Activated naive CD4-positive, alpha-beta T cell treated with anti-CD3 and anti-CD28 coated beads for 36 hours (primary cell): ENCODE measurements at regions of chr11 and their contacts with region 1.

Region 1: GRCh38 chr11:86592659-86593451 is 79.6 kb downstream of the ME3 start:
- DNase-seq: peak; percentile 98
- H3K4me3 Mint-ChIP-seq: no peak overlapping the region
- H3K27ac Mint-ChIP-seq: peak overlapping the region; percentile 86
- H3K4me1 Mint-ChIP-seq: peaks cover 70% of the 10 kb centered on the region
- H3K27me3 Mint-ChIP-seq: no peaks in the 10 kb centered on the region

Region 2: DNA sequence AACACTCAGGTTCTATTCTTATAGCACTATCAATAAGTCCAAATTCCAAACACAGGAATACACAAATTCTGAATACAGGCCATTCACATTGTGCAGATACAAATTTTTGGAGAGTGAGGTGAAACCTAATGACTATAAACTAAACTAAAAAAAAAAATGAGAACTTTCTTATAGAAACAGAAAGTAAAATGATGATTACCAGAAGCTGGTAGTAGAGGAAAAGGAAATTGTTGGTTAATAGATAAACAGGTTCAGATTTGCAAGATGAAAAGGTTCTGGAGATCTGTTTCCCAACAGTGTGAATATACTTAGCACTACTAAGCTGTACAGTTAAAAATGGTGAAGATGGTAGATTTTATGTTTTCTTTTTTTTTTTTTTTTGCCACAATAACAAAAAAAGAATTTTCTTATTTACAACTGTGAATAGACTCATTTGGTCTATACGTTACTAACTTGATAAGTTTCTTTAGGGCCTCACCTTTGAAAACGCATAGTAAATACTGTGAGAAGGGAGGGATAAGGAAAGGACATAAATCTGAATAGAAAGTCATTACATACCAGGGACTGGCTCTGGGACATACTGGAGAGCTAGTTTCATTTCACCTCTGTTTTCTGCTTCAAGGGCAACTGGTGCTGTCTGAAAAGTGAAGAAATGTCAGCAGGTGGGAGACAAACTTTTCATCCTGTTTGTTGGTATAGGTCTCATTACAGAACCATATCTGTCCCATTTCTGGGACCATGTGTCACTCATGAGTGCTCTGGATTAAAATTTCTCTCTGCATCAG is 892.7 kb before region 1 on chr11:
- CTCF ChIA-PET with region 1: no interaction called
- intact Hi-C with region 1: loop called (anchors 1 kb)
- DNase-seq: no peak
- H3K4me3 Mint-ChIP-seq: no peak overlapping the region
- H3K27ac Mint-ChIP-seq: peak overlapping the region; percentile 36
- H3K4me1 Mint-ChIP-seq: peaks cover 35% of the 10 kb centered on the region
- H3K27me3 Mint-ChIP-seq: no peaks in the 10 kb centered on the region

Region 3: DNA sequence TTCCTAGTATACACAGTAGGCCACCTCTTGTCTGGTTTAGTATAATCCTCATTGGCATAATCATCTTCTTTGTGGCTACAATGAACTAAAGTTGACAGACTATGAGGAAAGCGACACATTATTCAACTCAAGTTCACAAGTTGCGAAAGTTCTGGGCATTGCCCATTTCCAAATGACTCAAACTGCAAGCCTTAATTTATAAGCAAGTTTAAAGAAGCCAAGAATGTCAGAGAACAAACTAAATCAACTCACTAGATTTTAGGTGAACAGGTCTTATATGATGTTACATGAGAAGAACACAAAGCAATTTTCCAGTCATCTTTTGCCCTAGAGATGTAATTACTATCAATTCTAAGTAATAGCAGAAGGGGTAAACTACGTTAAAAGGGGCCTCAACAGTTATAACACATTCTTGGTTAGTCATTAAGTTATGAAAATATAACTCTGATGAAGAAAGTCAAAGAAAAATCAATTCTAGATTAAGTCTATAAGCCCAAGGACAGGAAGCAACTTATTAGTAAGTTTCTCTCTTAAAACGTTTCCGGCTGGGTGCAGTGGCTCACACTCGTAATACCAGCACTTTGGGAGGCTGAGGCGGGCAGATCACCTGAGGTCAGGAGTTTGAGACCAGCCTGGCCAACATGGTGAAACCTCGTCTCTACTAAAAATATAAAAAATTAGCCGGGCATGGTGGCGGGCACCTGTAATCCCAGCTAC is 545.4 kb before region 1 on chr11:
- CTCF ChIA-PET with region 1: no interaction called
- intact Hi-C with region 1: loop called (anchors 2 kb)
- DNase-seq: peak; percentile 69
- H3K4me3 Mint-ChIP-seq: peak overlapping the region; percentile 43
- H3K27ac Mint-ChIP-seq: peak overlapping the region; percentile 93
- H3K4me1 Mint-ChIP-seq: peaks cover 92% of the 10 kb centered on the region
- H3K27me3 Mint-ChIP-seq: no peaks in the 10 kb centered on the region

Region 4: DNA sequence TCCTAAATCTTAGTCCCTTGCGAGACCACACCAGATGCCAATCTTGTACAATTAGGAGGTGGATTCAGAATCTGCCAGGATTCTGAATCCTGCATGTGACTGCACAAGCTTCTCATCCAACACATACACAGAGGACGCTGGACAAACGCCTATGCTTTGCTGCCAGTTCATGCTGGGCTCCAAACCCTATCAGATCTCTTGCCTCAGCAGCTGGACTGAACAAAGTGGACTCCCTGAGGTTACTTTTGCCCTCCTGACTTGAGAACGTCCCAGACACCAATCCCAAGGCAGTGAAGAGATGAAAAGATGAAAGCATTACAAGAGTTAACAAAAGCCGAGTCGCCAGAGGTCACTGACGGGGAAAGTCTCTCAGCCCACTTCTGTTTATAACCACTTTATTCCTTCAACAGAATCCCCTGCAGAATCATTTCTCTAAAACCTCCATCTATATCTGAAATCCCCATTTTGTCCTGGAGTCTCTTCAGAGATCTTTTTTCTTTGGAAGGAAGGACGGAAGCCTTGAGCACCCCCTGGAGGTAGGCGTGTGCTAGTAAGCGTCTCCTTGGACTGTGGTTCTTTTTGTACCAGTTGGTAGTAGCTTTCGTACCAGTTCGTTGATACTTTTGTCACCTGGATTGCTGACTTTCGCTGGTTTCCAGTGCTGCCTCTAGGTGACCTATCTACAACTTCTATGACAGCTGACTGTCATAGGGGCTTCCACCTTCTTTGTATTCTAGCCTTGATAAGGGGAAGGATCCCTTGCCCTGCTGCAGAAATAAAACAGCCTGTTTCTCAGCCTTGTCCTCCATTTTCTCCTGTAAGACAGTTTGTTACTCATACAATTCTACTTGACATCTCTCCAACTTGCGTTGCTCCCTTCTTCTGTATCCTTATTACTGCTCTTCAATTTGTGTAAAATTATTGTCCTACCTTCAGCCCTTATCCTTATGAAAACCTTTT is 374.4 kb before region 1 on chr11:
- CTCF ChIA-PET with region 1: no interaction called
- intact Hi-C with region 1: loop called (anchors 2 kb)
- DNase-seq: peak; percentile 80
- H3K4me3 Mint-ChIP-seq: peak overlapping the region; percentile 14
- H3K27ac Mint-ChIP-seq: peak overlapping the region; percentile 90
- H3K4me1 Mint-ChIP-seq: peaks cover 82% of the 10 kb centered on the region
- H3K27me3 Mint-ChIP-seq: peaks cover 3% of the 10 kb centered on the region

Region 5: GRCh38 chr11:86511086-86511551 is 81.7 kb before region 1 on chr11:
- CTCF ChIA-PET with region 1: no interaction called
- intact Hi-C with region 1: loop called (anchors 1 kb)
- DNase-seq: peak; percentile 10
- H3K4me3 Mint-ChIP-seq: no peak overlapping the region
- H3K27ac Mint-ChIP-seq: no peak overlapping the region
- H3K4me1 Mint-ChIP-seq: peaks cover 8% of the 10 kb centered on the region
- H3K27me3 Mint-ChIP-seq: no peaks in the 10 kb centered on the region

Region 6: DNA sequence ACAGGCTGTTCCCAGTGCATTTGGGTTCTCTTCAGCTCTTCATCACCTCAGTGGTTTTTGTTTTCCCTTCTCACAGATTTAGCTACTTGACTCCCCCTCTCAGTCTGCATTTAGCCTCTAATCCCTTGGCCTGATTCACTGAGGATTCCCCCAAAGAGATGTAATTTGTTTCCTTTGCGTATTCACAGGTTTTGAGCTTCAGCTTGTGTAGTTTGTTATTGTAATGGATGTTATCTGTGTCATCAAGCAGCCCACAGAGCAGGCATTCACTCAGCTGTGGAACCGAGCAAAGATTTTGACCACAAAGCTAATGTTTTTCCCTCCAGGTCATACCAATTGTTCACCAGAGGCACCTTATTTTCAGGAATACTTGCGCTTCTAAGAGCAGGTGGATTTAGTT is 86.0 kb after region 1 on chr11:
- CTCF ChIA-PET with region 1: no interaction called
- intact Hi-C with region 1: no loop called
- DNase-seq: no peak
- H3K4me3 Mint-ChIP-seq: no peak overlapping the region
- H3K27ac Mint-ChIP-seq: no peak overlapping the region
- H3K4me1 Mint-ChIP-seq: no peaks in the 10 kb centered on the region
- H3K27me3 Mint-ChIP-seq: peaks cover 6% of the 10 kb centered on the region

Region 7: DNA sequence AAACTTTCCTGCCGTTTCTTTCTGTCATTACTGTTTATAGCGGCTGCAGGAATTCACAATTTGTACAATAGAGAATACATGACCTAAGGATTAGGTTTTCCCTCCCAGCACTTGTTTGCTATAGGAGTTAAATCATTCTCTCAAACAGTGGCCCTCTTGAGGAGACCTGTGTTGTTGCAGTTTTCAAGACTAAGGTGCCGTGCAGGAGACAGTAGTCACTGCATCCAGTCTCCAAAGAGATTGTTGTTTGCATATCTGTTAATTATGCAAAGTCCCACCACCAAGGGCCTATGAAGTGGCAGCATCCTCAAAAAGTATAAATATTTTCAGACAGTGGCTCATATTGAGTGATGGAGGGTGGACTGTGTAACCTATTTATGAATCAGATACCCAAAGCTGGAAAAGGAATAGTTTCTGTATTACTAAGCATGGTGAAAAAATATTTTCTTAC is 209.8 kb after region 1 on chr11:
- CTCF ChIA-PET with region 1: no interaction called
- intact Hi-C with region 1: loop called (anchors 1 kb)
- DNase-seq: peak; percentile 38
- H3K4me3 Mint-ChIP-seq: no peak overlapping the region
- H3K27ac Mint-ChIP-seq: no peak overlapping the region
- H3K4me1 Mint-ChIP-seq: peaks cover 53% of the 10 kb centered on the region
- H3K27me3 Mint-ChIP-seq: peaks cover 46% of the 10 kb centered on the region